Psoas muscle (tissue), 8 donors: ENCODE measurements at regions of chr21 and their contacts with region 1.

Region 1: GRCh38 chr21:33924079-33924765 is 8.6 kb upstream of the ATP5PO start:
- DNase-seq: peak; percentile 88 to 93
- ATAC-seq: peak; percentile 97 to 100 (median 98)
- H3K4me3 ChIP-seq: no peak overlapping the region
- H3K27ac ChIP-seq: no peak overlapping the region
- H3K4me1 ChIP-seq: no peaks in the 10 kb centered on the region
- H3K27me3 ChIP-seq: no peaks in the 10 kb centered on the region
- CTCF ChIP-seq: peak; percentile 92

Region 2: GRCh38 chr21:34630536-34631143 is 706.4 kb after region 1 on chr21:
- intact Hi-C with region 1: loop called in 1 of 2 experiments (anchors 5 kb)
- DNase-seq: no peak
- ATAC-seq: peak; percentile 54 to 91 (median 78)
- H3K4me3 ChIP-seq: no peak overlapping the region
- H3K27ac ChIP-seq: no peak overlapping the region
- H3K4me1 ChIP-seq: no peaks in the 10 kb centered on the region
- H3K27me3 ChIP-seq: peaks cover 0 to 17% (median 0%) of the 10 kb centered on the region in 3 donors
- CTCF ChIP-seq: peak; percentile 86